CD4-positive, alpha-beta memory T cell (primary cell): ENCODE measurements at regions of chr1 and their contacts with region 1.

Region 1: GRCh38 chr1:23524716-23525401 is 6.2 kb downstream of the E2F2 start:
- DNase-seq: peak; percentile 26 to 59 (median 36)
- H3K4me3 ChIP-seq: peak overlapping the region; percentile 5 to 44
- H3K4me3 Mint-ChIP-seq: peak overlapping the region; percentile 59 to 93 (median 74)
- H3K27ac ChIP-seq: peak overlapping the region; percentile 60
- H3K27ac Mint-ChIP-seq: peak overlapping the region; percentile 82 to 97 (median 93)
- H3K4me1 ChIP-seq: peaks cover 69% of the 10 kb centered on the region
- H3K4me1 Mint-ChIP-seq: peaks cover 52 to 83% (median 75%) of the 10 kb centered on the region in 4 donors
- H3K27me3 ChIP-seq: no peaks in the 10 kb centered on the region
- H3K27me3 Mint-ChIP-seq: no peaks in the 10 kb centered on the region

Region 2: GRCh38 chr1:23303524-23303923 is 221.3 kb before region 1 on chr1:
- CTCF ChIA-PET with region 1: no interaction called
- POLR2A ChIA-PET with region 1: no interaction called
- intact Hi-C with region 1: no loop called
- DNase-seq: no peak
- H3K4me3 ChIP-seq: no peak overlapping the region
- H3K4me3 Mint-ChIP-seq: no peak overlapping the region
- H3K27ac ChIP-seq: no peak overlapping the region
- H3K27ac Mint-ChIP-seq: peak overlapping the region in 1 of 7 donors; percentile 53
- H3K4me1 ChIP-seq: no peaks in the 10 kb centered on the region
- H3K4me1 Mint-ChIP-seq: peaks cover 0 to 8% (median 0%) of the 10 kb centered on the region in 4 donors
- H3K27me3 ChIP-seq: no peaks in the 10 kb centered on the region
- H3K27me3 Mint-ChIP-seq: no peaks in the 10 kb centered on the region

Region 3: DNA sequence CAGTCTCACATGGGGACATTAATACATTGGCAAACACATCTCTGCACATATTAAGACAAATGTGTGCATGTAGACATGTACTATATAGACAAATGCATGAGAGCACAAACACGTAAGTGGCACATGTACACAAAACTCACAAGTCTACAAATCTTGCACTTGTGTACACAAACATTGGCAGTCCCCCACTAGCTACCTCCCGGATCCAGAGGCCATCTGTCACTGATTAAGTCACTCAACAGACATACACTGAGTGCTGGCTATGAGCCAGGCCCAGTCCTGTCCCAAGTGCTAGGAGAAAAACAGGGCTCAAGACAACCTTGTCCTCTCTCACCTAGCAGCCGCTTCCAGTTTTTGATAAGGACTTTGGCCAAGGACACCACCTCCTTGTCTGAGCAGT is 107.3 kb before region 1 on chr1:
- CTCF ChIA-PET with region 1: no interaction called
- POLR2A ChIA-PET with region 1: no interaction called
- intact Hi-C with region 1: no loop called
- DNase-seq: no peak
- H3K4me3 ChIP-seq: no peak overlapping the region
- H3K4me3 Mint-ChIP-seq: no peak overlapping the region
- H3K27ac ChIP-seq: no peak overlapping the region
- H3K27ac Mint-ChIP-seq: peak overlapping the region in 1 of 7 donors; percentile 15
- H3K4me1 ChIP-seq: peaks cover 14% of the 10 kb centered on the region
- H3K4me1 Mint-ChIP-seq: peaks cover 9 to 16% (median 14%) of the 10 kb centered on the region in 4 donors
- H3K27me3 ChIP-seq: no peaks in the 10 kb centered on the region
- H3K27me3 Mint-ChIP-seq: no peaks in the 10 kb centered on the region

Region 4: DNA sequence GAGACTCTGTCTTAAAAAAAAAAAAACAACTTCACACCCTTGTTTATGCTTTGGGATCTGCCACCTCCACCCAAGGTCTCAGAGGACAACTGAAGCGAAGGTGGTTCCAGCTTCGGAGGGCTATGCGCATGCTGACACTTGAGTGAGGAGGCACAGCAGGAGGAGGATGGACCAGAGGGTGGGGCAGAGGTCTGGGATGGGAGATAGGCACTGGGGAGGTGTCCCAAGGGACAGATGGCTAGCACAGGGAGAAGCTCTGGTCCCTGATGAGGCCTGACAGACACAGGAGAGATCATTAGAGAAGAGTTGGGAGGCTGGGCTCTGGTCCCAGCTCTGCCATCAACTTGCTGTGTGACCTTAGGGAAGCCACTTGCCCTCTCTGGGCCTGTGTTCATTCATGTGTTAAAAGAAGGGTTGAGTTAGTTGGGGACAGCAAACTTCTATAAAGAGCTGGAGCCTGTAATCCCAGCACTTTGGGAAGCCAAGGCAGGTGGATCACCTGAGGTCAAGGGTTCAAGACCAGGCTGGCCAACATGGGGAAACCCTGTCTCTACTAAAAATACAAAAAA is 10.7 kb before region 1 on chr1:
- CTCF ChIA-PET with region 1: interaction called, 24 read pairs
- POLR2A ChIA-PET with region 1: interaction called, 41 read pairs
- intact Hi-C with region 1: no loop called
- DNase-seq: no peak
- H3K4me3 ChIP-seq: no peak overlapping the region
- H3K4me3 Mint-ChIP-seq: no peak overlapping the region
- H3K27ac ChIP-seq: no peak overlapping the region
- H3K27ac Mint-ChIP-seq: peak overlapping the region in 3 of 7 donors; percentile 31 to 76 (median 46)
- H3K4me1 ChIP-seq: no peaks in the 10 kb centered on the region
- H3K4me1 Mint-ChIP-seq: peaks cover 0 to 5% (median 2%) of the 10 kb centered on the region in 4 donors
- H3K27me3 ChIP-seq: no peaks in the 10 kb centered on the region
- H3K27me3 Mint-ChIP-seq: no peaks in the 10 kb centered on the region